CD8-positive, alpha-beta T cell (primary cell): ENCODE measurements at regions of chr4 and their contacts with region 1.

Region 1: GRCh38 chr4:44720371-44720770 is 6.0 kb downstream of the GNPDA2 start:
- DNase-seq: no peak
- ATAC-seq: no peak
- H3K4me3 ChIP-seq: no peak overlapping the region
- H3K4me3 Mint-ChIP-seq: no peak overlapping the region
- H3K27ac ChIP-seq: no peak overlapping the region
- H3K27ac Mint-ChIP-seq: no peak overlapping the region
- H3K4me1 ChIP-seq: peaks cover 17% of the 10 kb centered on the region
- H3K4me1 Mint-ChIP-seq: peaks cover 55% of the 10 kb centered on the region
- H3K27me3 ChIP-seq: no peaks in the 10 kb centered on the region
- H3K27me3 Mint-ChIP-seq: no peaks in the 10 kb centered on the region
- CTCF ChIP-seq: no peak

Region 2: GRCh38 chr4:44738615-44739014 is 18.2 kb after region 1 on chr4:
- CTCF ChIA-PET with region 1: no interaction called
- POLR2A ChIA-PET with region 1: no interaction called
- intact Hi-C with region 1: loop called in 1 of 2 experiments (anchors 1 kb)
- DNase-seq: no peak
- ATAC-seq: no peak
- H3K4me3 ChIP-seq: no peak overlapping the region
- H3K4me3 Mint-ChIP-seq: no peak overlapping the region
- H3K27ac ChIP-seq: no peak overlapping the region
- H3K27ac Mint-ChIP-seq: no peak overlapping the region
- H3K4me1 ChIP-seq: no peaks in the 10 kb centered on the region
- H3K4me1 Mint-ChIP-seq: no peaks in the 10 kb centered on the region
- H3K27me3 ChIP-seq: no peaks in the 10 kb centered on the region
- H3K27me3 Mint-ChIP-seq: peaks cover 26% of the 10 kb centered on the region
- CTCF ChIP-seq: no peak

Region 3: DNA sequence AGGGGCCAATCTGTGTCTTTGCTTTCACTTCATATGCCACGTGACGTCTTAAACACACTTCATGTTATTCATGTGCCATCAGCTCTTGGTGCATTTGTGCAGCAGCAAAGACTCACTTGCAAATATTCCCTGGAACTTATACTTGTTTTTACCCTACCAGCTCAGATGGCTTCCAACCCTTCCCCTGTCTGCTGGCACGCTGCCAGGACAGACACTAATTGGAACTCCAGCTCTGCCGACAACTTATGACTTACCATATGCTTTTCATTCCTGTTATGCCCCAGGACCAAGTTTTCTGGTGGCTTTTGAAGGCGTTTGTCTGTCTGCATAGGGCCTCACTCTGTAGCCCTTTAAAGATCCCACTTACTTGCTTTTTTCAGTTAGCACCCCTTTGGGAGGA is 267.6 kb after region 1 on chr4:
- CTCF ChIA-PET with region 1: no interaction called
- POLR2A ChIA-PET with region 1: no interaction called
- intact Hi-C with region 1: no loop called
- DNase-seq: no peak
- ATAC-seq: no peak
- H3K4me3 ChIP-seq: no peak overlapping the region
- H3K4me3 Mint-ChIP-seq: no peak overlapping the region
- H3K27ac ChIP-seq: no peak overlapping the region
- H3K27ac Mint-ChIP-seq: no peak overlapping the region
- H3K4me1 ChIP-seq: no peaks in the 10 kb centered on the region
- H3K4me1 Mint-ChIP-seq: no peaks in the 10 kb centered on the region
- H3K27me3 ChIP-seq: no peaks in the 10 kb centered on the region
- H3K27me3 Mint-ChIP-seq: no peaks in the 10 kb centered on the region
- CTCF ChIP-seq: no peak

Region 4: GRCh38 chr4:45679411-45679810 is 959.0 kb after region 1 on chr4:
- CTCF ChIA-PET with region 1: no interaction called
- POLR2A ChIA-PET with region 1: no interaction called
- intact Hi-C with region 1: no loop called
- DNase-seq: no peak
- ATAC-seq: no peak
- H3K4me3 ChIP-seq: no peak overlapping the region
- H3K4me3 Mint-ChIP-seq: no peak overlapping the region
- H3K27ac ChIP-seq: no peak overlapping the region
- H3K27ac Mint-ChIP-seq: no peak overlapping the region
- H3K4me1 ChIP-seq: no peaks in the 10 kb centered on the region
- H3K4me1 Mint-ChIP-seq: no peaks in the 10 kb centered on the region
- H3K27me3 ChIP-seq: no peaks in the 10 kb centered on the region
- H3K27me3 Mint-ChIP-seq: no peaks in the 10 kb centered on the region
- CTCF ChIP-seq: no peak